Activated naive CD4-positive, alpha-beta T cell treated with anti-CD3 and anti-CD28 coated beads for 36 hours (primary cell): ENCODE measurements at regions of chr12 and their contacts with region 1.

Region 1: DNA sequence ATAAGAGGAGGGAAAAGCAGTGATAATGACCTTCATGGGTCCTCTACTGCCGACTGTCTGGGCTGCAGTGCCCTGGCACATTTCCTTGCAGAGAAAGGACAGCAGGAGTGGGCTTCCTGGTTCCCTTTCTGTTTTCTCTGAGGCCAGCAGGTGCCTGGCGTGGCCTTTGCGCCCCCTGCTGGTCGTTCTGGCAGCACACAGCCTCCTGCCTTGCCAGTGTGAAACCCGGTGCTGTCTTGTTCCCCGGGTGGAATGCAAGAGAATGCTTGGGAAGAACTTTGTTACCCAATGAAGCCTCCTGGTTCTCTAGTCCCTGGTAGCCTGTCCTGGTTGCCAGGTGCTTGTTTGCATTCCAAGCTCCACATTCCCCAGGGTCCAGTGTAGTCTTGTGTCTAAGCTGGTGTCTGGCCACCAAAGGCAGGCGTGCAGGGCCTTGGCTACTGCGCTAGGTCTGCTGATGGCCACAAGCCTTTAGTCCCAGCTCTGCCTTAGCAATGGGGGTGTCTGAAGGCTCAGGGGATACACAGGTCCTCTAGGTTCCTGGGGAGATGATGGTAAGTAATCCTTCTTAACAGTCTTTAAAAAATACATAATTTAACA is 1392.4 kb upstream of the TMEM132C start:
- DNase-seq: peak; percentile 60
- H3K4me3 Mint-ChIP-seq: no peak overlapping the region
- H3K27ac Mint-ChIP-seq: no peak overlapping the region
- H3K4me1 Mint-ChIP-seq: no peaks in the 10 kb centered on the region
- H3K27me3 Mint-ChIP-seq: peaks cover 4% of the 10 kb centered on the region

Region 2: DNA sequence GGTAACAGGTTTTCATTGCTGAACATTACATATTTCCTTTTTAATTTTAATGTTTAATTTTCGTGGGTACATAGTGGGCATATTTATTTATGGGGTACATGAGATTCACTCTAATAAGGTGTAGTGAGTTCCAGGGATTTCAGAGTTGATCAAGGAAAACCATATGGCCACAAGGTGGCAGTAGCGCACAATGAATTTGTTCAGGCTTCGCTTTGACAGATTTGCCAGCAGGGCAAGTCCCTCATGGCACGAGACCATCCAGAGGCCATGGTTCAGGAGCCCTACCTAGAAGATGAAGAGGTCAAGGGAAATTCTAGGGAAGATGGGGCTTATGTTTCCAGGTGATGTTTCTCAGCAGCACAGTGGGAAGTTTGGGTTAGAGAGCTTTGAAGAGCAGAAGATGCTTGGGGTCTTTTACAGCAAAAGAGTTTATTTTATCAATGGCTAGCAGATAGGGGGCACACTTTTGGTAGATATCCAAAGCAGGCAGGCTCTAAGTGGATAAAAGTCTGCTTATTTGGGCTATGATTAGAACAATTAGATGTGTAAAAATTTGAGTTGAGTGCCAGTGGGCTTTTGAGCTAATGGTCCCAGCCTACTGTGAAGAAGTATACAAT is 804.9 kb before region 1 on chr12:
- CTCF ChIA-PET with region 1: interaction called, 5 read pairs
- intact Hi-C with region 1: loop called (anchors 1 kb)
- DNase-seq: peak; percentile 72
- H3K4me3 Mint-ChIP-seq: no peak overlapping the region
- H3K27ac Mint-ChIP-seq: no peak overlapping the region
- H3K4me1 Mint-ChIP-seq: no peaks in the 10 kb centered on the region
- H3K27me3 Mint-ChIP-seq: no peaks in the 10 kb centered on the region

Region 3: GRCh38 chr12:126347421-126347820 is 527.1 kb before region 1 on chr12:
- CTCF ChIA-PET with region 1: no interaction called
- intact Hi-C with region 1: loop called (anchors 5 kb)
- DNase-seq: peak; percentile 13
- H3K4me3 Mint-ChIP-seq: no peak overlapping the region
- H3K27ac Mint-ChIP-seq: no peak overlapping the region
- H3K4me1 Mint-ChIP-seq: no peaks in the 10 kb centered on the region
- H3K27me3 Mint-ChIP-seq: no peaks in the 10 kb centered on the region

Region 4: DNA sequence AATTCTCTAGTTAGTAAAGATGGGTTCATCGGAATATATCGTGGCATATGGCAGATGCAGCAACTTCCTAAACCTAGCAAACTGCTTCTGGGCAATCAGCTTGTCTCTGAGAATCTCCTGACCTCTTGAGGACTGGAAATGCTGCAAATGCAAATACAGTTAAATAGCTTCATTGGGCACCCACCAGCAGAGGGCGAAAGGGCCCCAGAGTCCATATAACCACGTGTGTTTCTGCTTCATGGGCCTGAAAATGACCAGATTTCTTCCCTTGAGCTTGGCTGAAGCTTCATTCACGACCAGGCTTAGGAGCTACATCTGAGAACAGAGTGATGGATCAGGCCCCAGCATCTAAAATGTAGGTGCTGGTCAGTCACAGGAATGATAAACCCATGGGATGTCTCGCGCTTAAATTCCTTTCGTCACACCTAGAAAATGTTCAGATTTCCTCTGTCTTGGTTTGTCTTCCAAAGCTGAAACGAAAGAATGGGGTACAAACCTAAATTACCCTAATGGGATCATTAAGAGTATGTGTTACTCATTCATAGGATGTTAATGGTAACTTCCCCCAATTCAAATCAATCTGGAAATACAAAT is 90.1 kb before region 1 on chr12:
- CTCF ChIA-PET with region 1: no interaction called
- intact Hi-C with region 1: loop called (anchors 1 kb)
- DNase-seq: peak; percentile 32
- H3K4me3 Mint-ChIP-seq: no peak overlapping the region
- H3K27ac Mint-ChIP-seq: no peak overlapping the region
- H3K4me1 Mint-ChIP-seq: no peaks in the 10 kb centered on the region
- H3K27me3 Mint-ChIP-seq: peaks cover 2% of the 10 kb centered on the region

Region 5: GRCh38 chr12:127381048-127381668 is 506.6 kb after region 1 on chr12:
- CTCF ChIA-PET with region 1: no interaction called
- intact Hi-C with region 1: loop called (anchors 10 kb)
- DNase-seq: peak; percentile 31
- H3K4me3 Mint-ChIP-seq: no peak overlapping the region
- H3K27ac Mint-ChIP-seq: no peak overlapping the region
- H3K4me1 Mint-ChIP-seq: peaks cover 2% of the 10 kb centered on the region
- H3K27me3 Mint-ChIP-seq: peaks cover 9% of the 10 kb centered on the region